Posterior cingulate gyrus (tissue), 11 donors: ENCODE measurements at regions of chr5 and their contacts with region 1.

Region 1: GRCh38 chr5:138418444-138418843 is 20.4 kb upstream of the REEP2 start:
- DNase-seq: no peak

Region 2: GRCh38 chr5:138226910-138227309 is 191.5 kb before region 1 on chr5:
- intact Hi-C with region 1: loop called (anchors 10 kb)
- DNase-seq: no peak